Left ventricle myocardium inferior (tissue), 1 donor: ENCODE measurements at regions of chr3 and their contacts with region 1.

Region 1: DNA sequence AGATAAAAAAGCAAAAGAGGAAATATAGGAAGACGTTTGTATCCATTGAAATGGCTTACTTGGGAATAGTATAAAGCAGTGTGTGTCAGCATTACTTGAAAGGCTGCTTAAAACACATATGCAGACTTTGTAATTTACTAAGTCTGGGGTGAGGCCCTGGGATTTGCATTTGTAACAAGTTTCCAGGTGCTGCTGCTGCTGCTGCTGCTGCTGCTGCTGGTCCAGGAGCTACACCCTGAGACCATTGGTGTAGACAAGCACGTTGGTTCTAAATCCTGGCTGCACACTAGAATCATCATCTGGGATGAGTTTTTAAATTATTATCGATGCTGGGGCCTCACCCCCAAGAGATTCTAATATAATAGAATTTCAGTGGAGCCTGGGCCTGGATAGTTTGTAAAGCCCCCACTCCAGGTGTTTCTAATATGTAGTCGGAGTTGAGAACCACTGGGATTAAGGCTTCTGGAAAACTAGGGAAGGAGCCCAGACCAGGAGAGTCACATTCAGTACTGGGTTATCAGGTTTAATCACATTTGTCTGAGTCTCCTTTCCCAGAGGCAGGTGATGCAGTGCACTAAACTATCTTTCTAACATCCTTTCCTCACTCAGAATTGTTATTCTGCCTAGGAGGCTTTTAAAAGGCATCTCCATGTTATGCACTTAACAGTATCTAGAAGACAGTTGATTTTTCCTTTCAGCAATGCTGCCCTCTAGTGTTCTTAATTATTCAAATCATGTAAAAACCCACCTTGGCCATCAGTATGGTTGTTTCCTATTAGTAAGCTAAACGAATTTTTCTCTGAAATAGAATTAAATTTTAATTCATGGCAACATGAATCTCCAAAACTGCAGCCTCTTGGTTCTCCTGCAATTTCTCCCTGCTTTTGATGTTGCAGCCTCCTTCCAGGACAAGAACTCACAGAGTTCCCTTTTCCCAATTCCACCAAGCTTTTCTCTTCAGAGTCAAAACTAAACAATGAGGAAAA is 45.4 kb downstream of the SSR3 start:
- DNase-seq: no peak
- H3K4me3 ChIP-seq: no peak overlapping the region
- H3K27ac ChIP-seq: no peak overlapping the region
- H3K4me1 ChIP-seq: no peaks in the 10 kb centered on the region
- H3K27me3 ChIP-seq: no peaks in the 10 kb centered on the region
- CTCF ChIP-seq: peak; percentile 73

Region 2: GRCh38 chr3:156037356-156037755 is 472.1 kb before region 1 on chr3:
- intact Hi-C with region 1: loop called (anchors 10 kb)
- DNase-seq: no peak
- H3K4me3 ChIP-seq: no peak overlapping the region
- H3K27ac ChIP-seq: no peak overlapping the region
- H3K4me1 ChIP-seq: no peaks in the 10 kb centered on the region
- H3K27me3 ChIP-seq: no peaks in the 10 kb centered on the region
- CTCF ChIP-seq: no peak

Region 3: DNA sequence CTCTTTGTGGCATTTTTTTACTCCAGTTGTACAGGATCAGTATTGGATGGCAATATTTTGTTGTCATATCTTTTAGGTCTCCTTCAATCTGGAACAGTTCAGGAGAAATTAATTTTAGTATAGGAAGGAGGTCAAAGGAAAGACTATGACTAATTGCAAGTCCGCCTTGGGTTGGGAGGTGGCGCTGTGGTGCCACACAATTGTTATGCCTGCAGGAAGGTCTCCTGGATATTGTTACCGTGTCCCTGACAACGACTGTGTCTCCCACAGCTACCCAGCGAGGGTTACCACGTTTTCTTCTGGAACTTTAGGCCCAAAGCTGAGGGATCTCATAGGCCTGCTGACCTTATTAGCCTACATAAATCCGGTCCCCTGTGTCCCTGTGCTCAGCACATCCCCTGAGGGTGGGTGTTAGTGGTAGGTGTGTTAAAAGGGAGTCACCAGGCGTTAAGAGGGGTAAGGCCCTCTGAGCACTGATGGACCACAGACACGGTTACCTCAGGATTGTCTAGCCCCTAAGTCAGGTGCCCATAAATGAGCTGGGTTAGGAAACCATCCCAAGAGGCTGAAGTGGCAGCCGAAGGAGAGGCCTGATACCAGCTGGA is 357.6 kb before region 1 on chr3:
- intact Hi-C with region 1: loop called (anchors 5 kb)
- DNase-seq: peak; percentile 64
- H3K4me3 ChIP-seq: no peak overlapping the region
- H3K27ac ChIP-seq: peak overlapping the region; percentile 71
- H3K4me1 ChIP-seq: peaks cover 44% of the 10 kb centered on the region
- H3K27me3 ChIP-seq: no peaks in the 10 kb centered on the region
- CTCF ChIP-seq: peak; percentile 79

Region 4: DNA sequence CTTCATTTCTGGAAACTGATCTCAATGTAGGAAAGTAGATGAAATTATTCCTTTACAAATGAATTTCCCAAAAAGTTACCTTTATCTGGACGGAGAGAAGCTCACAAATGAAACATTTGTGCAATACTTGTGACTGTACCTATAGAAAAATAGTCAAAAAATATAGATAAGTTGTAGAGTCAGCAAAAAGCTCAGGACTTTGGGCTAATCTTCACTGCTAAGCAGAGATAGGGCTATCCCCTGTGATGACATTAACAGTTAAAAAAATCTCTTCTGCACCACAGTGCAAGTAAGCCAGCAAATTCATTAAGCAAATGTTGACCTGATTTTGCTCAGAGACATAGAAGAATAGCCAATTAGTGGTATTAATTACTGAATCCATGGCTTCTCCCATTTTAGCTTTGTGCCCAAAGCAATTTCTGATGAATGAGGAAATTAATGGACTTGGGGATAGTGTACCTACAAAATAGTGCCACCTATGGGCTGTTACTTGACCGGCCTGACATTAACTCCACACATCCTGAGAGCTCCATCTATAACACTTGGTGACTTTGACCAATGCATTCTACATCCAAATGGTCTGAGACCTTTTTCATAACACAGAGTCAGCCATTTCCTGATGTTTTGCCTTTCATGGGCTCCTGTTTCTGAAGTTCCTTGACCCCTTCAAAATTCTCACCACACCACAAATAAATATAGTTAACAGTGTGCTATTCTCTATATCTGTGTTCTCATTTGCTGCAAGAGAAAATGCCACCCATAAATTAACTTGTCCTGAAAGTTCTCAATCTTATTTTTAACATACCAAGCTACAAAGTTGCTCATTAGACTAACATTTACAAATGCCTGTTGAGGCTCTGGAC is 59.5 kb before region 1 on chr3:
- intact Hi-C with region 1: no loop called
- DNase-seq: no peak
- H3K4me3 ChIP-seq: no peak overlapping the region
- H3K27ac ChIP-seq: no peak overlapping the region
- H3K4me1 ChIP-seq: no peaks in the 10 kb centered on the region
- H3K27me3 ChIP-seq: no peaks in the 10 kb centered on the region
- CTCF ChIP-seq: peak; percentile 71